ENCODE measurements at regions of chr19 and their contacts with region 1.

Region 1: DNA sequence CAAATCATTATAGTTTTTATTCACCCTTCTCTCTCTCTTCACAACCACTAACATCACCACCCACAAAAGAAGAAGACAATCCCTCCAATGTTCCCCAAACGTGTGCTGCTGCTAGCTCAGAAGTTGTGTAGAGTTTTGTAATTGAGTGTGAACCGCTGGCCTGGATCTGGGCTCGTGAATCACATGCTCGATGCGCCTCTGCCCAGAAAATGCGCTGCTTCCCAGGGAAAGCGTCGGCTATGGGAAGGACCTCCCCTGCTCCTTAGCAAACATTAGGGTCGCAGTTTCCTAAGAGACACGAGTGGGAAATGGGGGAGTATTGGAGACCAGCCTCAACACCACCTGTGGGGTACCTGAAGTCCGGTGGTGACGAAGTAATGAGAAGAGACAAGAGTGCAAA is 38.4 kb upstream of the ZNF726 start:
- DNase-seq: no peak
- ATAC-seq: no peak
- H3K4me3 ChIP-seq: no peak overlapping the region
- H3K27ac ChIP-seq: no peak overlapping the region
- H3K4me1 ChIP-seq: peaks cover 0 to 8% (median 0%) of the 10 kb centered on the region in 4 donors
- H3K27me3 ChIP-seq: no peaks in the 10 kb centered on the region
- CTCF ChIP-seq: no peak
- POLR2A ChIP-seq: no peak

Region 2: GRCh38 chr19:23527797-23528196 is 348.5 kb before region 1 on chr19:
- intact Hi-C with region 1: no loop called
- DNase-seq: no peak
- ATAC-seq: no peak
- H3K4me3 ChIP-seq: no peak overlapping the region
- H3K27ac ChIP-seq: no peak overlapping the region
- H3K4me1 ChIP-seq: no peaks in the 10 kb centered on the region
- H3K27me3 ChIP-seq: no peaks in the 10 kb centered on the region
- CTCF ChIP-seq: no peak
- POLR2A ChIP-seq: no peak

Region 3: DNA sequence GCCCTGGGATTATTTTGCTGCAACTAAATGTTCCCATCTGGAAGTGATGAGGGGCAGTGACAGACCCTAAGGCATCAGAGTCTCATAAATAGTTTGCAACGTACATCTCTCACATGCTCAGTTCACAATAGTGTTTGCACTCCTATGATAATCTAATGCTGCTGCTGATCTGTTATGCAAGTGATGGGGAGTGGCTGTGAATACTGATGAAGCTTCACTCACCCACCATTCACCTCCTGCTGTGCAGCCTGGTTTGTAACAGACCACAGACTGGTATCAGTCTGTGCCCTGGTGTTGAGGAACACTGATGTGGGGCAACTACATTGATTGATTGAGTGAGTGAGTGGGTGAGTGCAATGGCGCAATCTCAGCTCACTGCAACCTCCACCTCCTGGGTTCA is 93.4 kb after region 1 on chr19:
- intact Hi-C with region 1: loop called in 1 of 2 experiments (anchors 10 kb)
- DNase-seq: no peak
- ATAC-seq: peak in 1 of 4 donors; percentile 33
- H3K4me3 ChIP-seq: no peak overlapping the region
- H3K27ac ChIP-seq: no peak overlapping the region
- H3K4me1 ChIP-seq: peaks cover 0 to 5% (median 3%) of the 10 kb centered on the region in 4 donors
- H3K27me3 ChIP-seq: no peaks in the 10 kb centered on the region
- CTCF ChIP-seq: no peak
- POLR2A ChIP-seq: no peak

Region 4: DNA sequence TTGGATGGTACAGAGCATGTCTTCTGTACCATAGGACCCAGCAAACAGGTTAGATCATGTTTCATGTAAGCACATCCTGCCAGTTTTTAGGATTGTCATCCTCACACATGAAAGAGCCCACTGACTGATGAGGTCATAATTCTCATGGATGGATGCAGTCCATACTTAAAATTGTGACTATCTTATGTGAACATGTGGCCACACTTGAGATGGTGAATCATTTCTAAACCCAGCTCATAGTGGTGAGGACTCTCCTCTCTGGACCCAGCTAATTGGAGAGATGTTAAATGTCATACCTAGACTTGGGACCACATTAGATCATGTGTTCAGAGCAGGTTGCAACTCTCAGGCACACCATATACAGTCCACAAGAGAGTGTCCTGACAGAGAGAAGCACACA is 185.9 kb after region 1 on chr19:
- intact Hi-C with region 1: no loop called
- DNase-seq: no peak
- ATAC-seq: no peak
- H3K4me3 ChIP-seq: no peak overlapping the region
- H3K27ac ChIP-seq: no peak overlapping the region
- H3K4me1 ChIP-seq: no peaks in the 10 kb centered on the region
- H3K27me3 ChIP-seq: no peaks in the 10 kb centered on the region
- CTCF ChIP-seq: no peak
- POLR2A ChIP-seq: no peak

Measured in right lobe of liver (tissue), 6 donors.